ENCODE measurements at regions of chr12 and their contacts with region 1.

Region 1: DNA sequence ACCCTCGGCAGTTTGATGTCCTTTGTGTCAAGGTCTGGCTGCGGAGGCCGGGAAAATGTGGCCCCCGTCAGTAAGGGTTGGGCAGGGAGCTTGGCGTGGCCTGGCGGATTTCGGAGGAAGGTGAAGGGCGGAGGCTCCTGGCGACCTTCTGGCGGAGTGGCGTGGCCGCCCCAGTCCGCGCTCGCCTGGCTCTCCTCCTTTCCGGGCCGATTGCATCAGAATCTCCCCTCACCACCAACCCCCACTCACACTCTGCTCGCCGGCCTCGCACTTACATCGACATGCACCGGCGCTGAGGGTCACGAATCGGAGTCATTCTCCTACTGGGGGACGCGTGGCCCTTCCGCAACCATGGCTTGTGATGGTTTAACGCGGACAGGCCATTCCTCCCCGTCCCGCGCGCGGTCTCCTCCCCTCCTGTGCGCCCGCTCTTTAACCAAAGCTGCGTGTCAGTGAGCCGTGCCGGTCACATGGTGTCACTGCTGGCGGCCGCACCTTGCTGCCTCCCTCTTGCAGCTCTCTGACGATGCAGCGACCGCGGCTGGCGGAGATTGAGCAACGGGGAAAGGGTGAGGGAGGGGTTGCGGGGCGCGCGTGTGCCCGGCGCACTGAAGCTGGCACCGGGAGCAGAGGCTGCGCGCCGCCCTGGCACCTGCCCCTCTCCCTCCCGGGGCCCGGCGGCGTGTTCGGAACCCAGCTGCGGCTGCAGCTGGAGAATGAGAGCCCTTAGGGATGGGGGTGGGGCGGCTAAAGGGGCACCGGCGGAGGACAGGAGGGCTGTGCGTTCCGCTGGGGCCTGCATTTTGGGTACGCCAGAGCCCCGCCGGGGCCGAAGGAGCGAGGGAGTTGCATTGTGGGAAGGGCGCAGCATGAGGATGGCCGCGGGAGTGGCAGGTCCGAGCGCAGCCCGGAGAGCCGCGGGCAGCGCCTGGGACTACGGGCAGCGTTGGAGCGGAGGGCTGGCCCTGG is at the start of gene SLC38A1:
- DNase-seq: peak; percentile 77 to 96 (median 88)
- ATAC-seq: peak; percentile 67 to 72
- H3K4me3 Mint-ChIP-seq: no peak within 1 kb of the TSS
- H3K27ac Mint-ChIP-seq: no peak within 1 kb of the TSS
- H3K4me1 Mint-ChIP-seq: peaks cover 19 to 44% (median 38%) of the 10 kb centered on the region in 4 donors
- H3K27me3 Mint-ChIP-seq: no peaks in the 10 kb centered on the region
- polyA plus RNA-seq, gene SLC38A1: 255 to 308 (median 264) TPM

Region 2: GRCh38 chr12:46153268-46153872 is 115.5 kb before region 1 on chr12:
- POLR2A ChIA-PET with region 1: interaction called, 24 read pairs
- DNase-seq: peak in 3 of 10 donors; percentile 45 to 60 (median 53)
- ATAC-seq: no peak
- H3K4me3 Mint-ChIP-seq: peak overlapping the region in 3 of 10 donors; percentile 12 to 23 (median 19)
- H3K27ac Mint-ChIP-seq: peak overlapping the region in 2 of 10 donors; percentile 8 to 64
- H3K4me1 Mint-ChIP-seq: peaks cover 10 to 32% (median 16%) of the 10 kb centered on the region in 4 donors
- H3K27me3 Mint-ChIP-seq: peaks cover 0 to 5% (median 1%) of the 10 kb centered on the region in 5 donors

Region 3: GRCh38 chr12:46198913-46199312 is 70.0 kb before region 1 on chr12:
- POLR2A ChIA-PET with region 1: interaction called, 117 read pairs
- DNase-seq: no peak
- ATAC-seq: peak; percentile 39 to 51
- H3K4me3 Mint-ChIP-seq: peak overlapping the region in 3 of 10 donors; percentile 15 to 39 (median 28)
- H3K27ac Mint-ChIP-seq: peak overlapping the region; percentile 0 to 86 (median 79)
- H3K4me1 Mint-ChIP-seq: peaks cover 11 to 39% (median 25%) of the 10 kb centered on the region in 4 donors
- H3K27me3 Mint-ChIP-seq: no peaks in the 10 kb centered on the region

Region 4: DNA sequence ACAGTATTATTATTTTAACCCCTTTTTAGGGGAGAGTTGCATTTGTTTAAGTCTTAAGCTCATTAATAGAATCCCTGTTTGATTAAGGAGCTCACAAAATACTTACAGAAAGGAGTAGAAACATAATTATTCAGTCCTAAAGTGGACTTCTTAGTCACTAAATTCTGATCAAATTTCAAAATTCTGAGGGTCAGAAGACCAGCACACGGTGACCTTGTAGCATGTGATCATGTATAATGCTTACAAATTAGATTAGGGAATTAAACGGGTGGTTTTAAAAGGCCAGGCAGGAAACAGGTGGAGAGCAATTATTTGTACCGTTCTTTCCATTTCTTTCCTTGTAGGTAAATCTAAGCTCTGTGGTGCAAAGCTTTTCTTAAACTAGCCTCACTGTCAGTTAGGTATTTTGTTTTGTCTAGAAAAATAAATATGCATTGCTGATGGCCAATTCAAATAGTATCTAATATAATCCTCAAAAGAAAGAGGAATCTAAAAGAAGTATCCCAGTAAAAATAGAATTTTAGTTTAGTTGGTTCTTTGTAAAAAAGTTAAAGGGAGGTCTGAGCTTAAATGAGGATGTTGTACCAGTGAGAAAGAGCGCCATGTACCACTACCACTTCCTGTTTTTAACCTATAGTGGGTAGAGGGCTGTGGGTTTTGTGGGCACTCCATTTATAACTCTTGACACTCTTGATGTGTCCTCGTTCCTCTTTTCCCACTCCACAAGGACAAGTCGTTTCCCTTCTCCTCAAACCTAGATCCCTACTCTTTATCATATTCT is 51.1 kb before region 1 on chr12:
- POLR2A ChIA-PET with region 1: interaction called, 365 read pairs
- DNase-seq: peak; percentile 17 to 92 (median 70)
- ATAC-seq: peak; percentile 39 to 44
- H3K4me3 Mint-ChIP-seq: peak overlapping the region; percentile 69 to 87 (median 82)
- H3K27ac Mint-ChIP-seq: peak overlapping the region; percentile 96 to 100 (median 98)
- H3K4me1 Mint-ChIP-seq: peaks cover 55 to 100% (median 93%) of the 10 kb centered on the region in 4 donors
- H3K27me3 Mint-ChIP-seq: no peaks in the 10 kb centered on the region

Region 5: GRCh38 chr12:46246021-46246700 is 22.7 kb before region 1 on chr12:
- POLR2A ChIA-PET with region 1: interaction called, 27 read pairs
- DNase-seq: peak in 9 of 10 donors; percentile 5 to 82 (median 58)
- ATAC-seq: peak; percentile 86 to 92
- H3K4me3 Mint-ChIP-seq: peak overlapping the region; percentile 31 to 84 (median 78)
- H3K27ac Mint-ChIP-seq: peak overlapping the region; percentile 58 to 95 (median 90)
- H3K4me1 Mint-ChIP-seq: peaks cover 45 to 96% (median 93%) of the 10 kb centered on the region in 4 donors
- H3K27me3 Mint-ChIP-seq: no peaks in the 10 kb centered on the region

Region 6: GRCh38 chr12:46303039-46303666 is 34.3 kb after region 1 on chr12:
- POLR2A ChIA-PET with region 1: interaction called, 50 read pairs
- DNase-seq: peak in 9 of 10 donors; percentile 27 to 80 (median 50)
- ATAC-seq: peak; percentile 80 to 90
- H3K4me3 Mint-ChIP-seq: no peak overlapping the region
- H3K27ac Mint-ChIP-seq: peak overlapping the region in 5 of 10 donors; percentile 0 to 77 (median 3)
- H3K4me1 Mint-ChIP-seq: peaks cover 15 to 25% (median 21%) of the 10 kb centered on the region in 4 donors
- H3K27me3 Mint-ChIP-seq: no peaks in the 10 kb centered on the region

Region 7: DNA sequence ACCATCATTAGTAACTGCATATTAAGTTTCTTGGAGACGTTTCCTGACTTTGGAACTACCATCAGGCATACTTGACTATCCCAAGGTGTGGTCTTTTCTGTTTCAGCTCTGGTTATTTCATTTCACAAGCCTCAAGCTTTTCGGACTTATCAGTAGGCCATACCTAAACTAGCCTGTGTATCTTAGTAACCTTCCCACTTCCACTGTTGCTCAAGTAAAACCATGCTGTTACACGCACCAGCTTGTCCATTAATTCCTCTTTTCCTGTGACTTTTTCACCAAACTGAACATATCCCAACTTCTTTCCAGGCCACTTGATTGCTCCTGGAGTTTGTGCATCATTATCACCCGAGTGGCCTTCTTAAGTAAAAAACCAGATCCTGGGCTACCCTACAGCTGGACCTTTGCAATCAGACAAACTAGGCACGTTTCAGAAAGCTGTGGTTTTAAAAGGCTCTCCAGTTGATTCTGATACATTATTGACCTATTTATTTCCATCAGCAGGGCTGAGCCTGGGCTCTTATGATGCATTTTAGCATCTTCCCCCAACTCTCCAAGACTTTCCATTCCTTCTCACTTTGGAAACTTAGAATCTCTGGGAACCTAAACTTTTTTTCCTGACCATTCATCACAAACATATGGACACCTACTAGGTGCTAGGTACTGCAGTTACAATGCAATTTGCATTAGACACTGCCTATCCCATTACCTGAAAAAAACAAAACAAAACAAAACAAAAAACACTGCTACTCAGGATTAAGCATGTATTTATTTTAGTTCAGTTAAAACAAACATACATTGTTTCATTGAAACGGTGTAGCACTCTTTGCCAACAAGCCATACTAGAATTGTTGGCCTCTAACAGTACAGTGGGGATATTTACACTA is 88.8 kb after region 1 on chr12:
- POLR2A ChIA-PET with region 1: no interaction called
- DNase-seq: no peak
- ATAC-seq: peak in 1 of 2 donors; percentile 14
- H3K4me3 Mint-ChIP-seq: no peak overlapping the region
- H3K27ac Mint-ChIP-seq: peak overlapping the region in 8 of 10 donors; percentile 5 to 82 (median 49)
- H3K4me1 Mint-ChIP-seq: peaks cover 23 to 45% (median 33%) of the 10 kb centered on the region in 4 donors
- H3K27me3 Mint-ChIP-seq: no peaks in the 10 kb centered on the region

Measured in naive thymus-derived CD8-positive, alpha-beta T cell (primary cell).